HepG2 (cell line): ENCODE measurements at regions of chr7 and their contacts with region 1.

Region 1: DNA sequence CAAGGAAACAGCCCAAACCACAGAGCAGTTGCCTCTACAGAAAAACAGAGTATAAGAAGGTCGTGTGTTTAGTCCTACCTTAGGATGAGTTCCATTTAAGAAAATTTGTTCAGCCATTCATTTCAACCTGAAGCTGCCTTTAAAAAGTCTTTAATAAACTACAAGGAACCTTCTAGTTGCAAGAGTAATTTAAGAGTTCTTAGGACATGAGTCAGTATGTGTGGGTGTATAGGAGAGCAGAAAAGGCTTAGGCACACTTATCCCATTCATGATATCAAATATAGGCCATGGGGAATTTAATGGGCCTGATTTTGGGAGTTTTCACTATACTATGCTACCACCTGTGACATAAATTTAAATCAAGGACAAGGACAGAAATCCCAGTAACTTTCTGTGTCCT is 496.8 kb downstream of the TFEC start:
- DNase-seq: no peak
- ATAC-seq: no peak
- H3K4me3 ChIP-seq: no peak overlapping the region
- H3K27ac ChIP-seq: no peak overlapping the region
- H3K4me1 ChIP-seq: no peaks in the 10 kb centered on the region
- H3K27me3 ChIP-seq: no peaks in the 10 kb centered on the region
- CTCF ChIP-seq: no peak
- EP300 ChIP-seq: no peak
- POLR2A ChIP-seq: no peak
- RAD21 ChIP-seq: no peak

Region 2: DNA sequence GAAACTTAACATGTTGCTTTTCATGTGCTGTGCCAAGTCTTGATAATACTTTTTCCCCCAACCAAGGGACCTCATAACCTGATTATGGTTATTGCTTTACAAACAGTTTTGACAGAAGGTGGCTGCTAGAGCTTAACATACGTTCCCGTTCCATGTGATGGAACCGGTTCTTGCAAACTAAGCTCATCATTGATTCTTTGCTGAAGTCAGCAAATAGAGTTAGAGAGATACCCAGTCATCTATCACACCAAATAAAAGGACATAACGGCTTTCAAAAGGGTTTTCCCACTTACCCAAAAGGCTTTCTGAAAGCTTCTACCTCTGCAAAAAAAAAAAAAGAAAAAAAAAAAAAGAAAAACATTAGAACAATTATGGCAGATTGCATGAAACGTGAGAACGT is 842.2 kb before region 1 on chr7:
- CTCF ChIA-PET with region 1: no interaction called
- POLR2A ChIA-PET with region 1: no interaction called
- in situ Hi-C with region 1: no loop called
- intact Hi-C with region 1: loop called (anchors 10 kb)
- DNase-seq: no peak
- ATAC-seq: no peak
- H3K4me3 ChIP-seq: no peak overlapping the region
- H3K27ac ChIP-seq: no peak overlapping the region
- H3K4me1 ChIP-seq: no peaks in the 10 kb centered on the region
- H3K27me3 ChIP-seq: no peaks in the 10 kb centered on the region
- CTCF ChIP-seq: no peak
- EP300 ChIP-seq: no peak
- POLR2A ChIP-seq: no peak
- RAD21 ChIP-seq: no peak

Region 3: DNA sequence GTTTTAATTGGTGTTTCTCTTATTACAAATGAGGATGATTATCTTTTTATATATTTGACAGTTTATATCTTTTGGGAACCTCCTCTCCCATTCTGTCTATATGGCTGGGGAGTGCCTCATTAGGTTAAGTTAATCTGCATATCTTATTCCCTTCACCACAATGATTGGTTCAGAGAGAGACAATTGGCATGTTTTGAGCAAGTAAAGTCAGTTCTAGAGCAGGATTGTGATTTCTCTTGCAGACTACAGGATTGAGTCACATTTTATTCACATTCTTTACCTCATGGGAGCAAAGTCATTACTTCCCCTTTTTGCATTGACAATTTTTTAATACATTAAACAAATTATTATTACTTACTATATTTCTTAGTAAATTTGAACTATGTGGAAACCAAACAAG is 266.3 kb before region 1 on chr7:
- CTCF ChIA-PET with region 1: no interaction called
- POLR2A ChIA-PET with region 1: no interaction called
- in situ Hi-C with region 1: no loop called
- intact Hi-C with region 1: no loop called
- DNase-seq: no peak
- ATAC-seq: no peak
- H3K4me3 ChIP-seq: no peak overlapping the region
- H3K27ac ChIP-seq: no peak overlapping the region
- H3K4me1 ChIP-seq: no peaks in the 10 kb centered on the region
- H3K27me3 ChIP-seq: no peaks in the 10 kb centered on the region
- CTCF ChIP-seq: no peak
- EP300 ChIP-seq: no peak
- POLR2A ChIP-seq: no peak
- RAD21 ChIP-seq: no peak

Region 4: DNA sequence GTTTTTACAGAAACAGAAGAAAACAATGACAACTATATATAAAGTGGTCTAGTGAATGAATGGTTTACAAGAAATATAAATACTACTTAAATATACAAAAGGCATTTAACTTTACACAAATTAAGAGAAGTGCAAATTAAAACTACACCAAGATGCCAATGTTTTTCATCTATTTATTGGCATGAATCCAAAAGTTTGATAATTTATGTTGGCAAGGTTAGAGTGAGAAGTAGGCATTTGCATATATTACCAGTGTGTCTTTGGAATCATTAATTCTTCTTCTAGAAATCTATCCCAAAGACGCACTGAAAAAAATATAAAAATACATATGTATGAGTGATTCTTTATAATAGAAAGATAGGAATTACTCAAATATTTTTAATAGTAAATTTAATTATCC is 154.5 kb before region 1 on chr7:
- CTCF ChIA-PET with region 1: no interaction called
- POLR2A ChIA-PET with region 1: no interaction called
- in situ Hi-C with region 1: no loop called
- intact Hi-C with region 1: no loop called
- DNase-seq: no peak
- ATAC-seq: no peak
- H3K4me3 ChIP-seq: no peak overlapping the region
- H3K27ac ChIP-seq: no peak overlapping the region
- H3K4me1 ChIP-seq: no peaks in the 10 kb centered on the region
- H3K27me3 ChIP-seq: no peaks in the 10 kb centered on the region
- CTCF ChIP-seq: no peak
- EP300 ChIP-seq: no peak
- POLR2A ChIP-seq: no peak
- RAD21 ChIP-seq: no peak

Region 5: DNA sequence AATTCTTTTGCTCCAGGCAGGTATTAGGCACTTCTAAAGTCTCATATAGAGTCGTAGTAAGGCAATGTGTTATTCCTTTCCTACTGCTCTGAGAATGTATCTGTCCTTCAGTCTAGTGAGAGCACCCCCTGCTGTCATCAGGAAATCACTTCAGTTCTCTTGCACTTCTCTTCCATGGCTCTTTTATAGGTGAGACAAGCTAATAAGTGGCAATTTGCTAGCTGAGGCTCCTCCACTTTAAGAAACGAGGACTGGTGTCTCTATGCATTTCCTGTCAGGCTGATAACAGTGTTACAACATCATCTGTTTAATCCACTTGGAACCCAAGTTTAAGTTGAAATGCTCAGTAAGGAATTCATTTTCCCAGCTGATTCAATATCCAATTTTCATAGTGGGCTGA is 146.2 kb after region 1 on chr7:
- CTCF ChIA-PET with region 1: no interaction called
- POLR2A ChIA-PET with region 1: no interaction called
- in situ Hi-C with region 1: no loop called
- intact Hi-C with region 1: no loop called
- DNase-seq: peak; percentile 58
- ATAC-seq: peak; percentile 76
- H3K4me3 ChIP-seq: no peak overlapping the region
- H3K27ac ChIP-seq: no peak overlapping the region
- H3K4me1 ChIP-seq: peaks cover 34% of the 10 kb centered on the region
- H3K27me3 ChIP-seq: no peaks in the 10 kb centered on the region
- CTCF ChIP-seq: peak; percentile 65
- EP300 ChIP-seq: no peak
- POLR2A ChIP-seq: no peak
- RAD21 ChIP-seq: 0 out of 2 replicates have a peak, but pooled peaks have one; percentile 27